ENCODE measurements at regions of chr6 and their contacts with region 1.

Region 1: DNA sequence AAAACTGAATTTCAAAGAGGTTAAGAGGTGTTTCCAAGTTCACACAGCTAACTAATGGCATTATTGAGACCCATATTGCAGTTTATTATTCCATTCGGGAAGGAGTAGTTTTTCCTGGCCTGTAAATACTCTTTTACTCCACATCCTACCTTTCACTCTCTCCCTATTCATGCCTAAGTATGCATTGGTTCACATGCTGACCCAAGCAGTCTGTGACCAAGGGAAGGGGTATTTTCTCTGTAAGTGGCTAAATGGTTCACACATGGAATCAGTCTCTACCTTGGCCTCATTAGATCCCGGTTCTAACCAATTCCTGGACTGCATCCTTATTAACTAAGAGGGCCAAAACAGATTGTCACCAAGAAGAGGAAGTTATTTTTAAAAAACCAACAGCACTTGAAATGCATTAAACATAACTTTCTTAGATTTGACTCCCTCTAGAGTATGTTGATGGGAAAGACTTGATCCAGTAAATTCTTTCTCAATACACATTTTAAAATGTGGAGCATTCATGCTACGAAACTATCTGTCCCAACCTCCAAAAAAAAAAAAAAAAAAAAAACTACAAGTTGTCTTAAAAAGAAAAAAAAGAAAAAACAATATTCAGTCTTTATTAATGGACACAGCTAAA is 17.8 kb upstream of the RSPO3 start:
- DNase-seq: no peak
- ATAC-seq: peak; percentile 62
- H3K4me3 ChIP-seq: no peak overlapping the region
- H3K27ac ChIP-seq: no peak overlapping the region
- H3K4me1 ChIP-seq: no peaks in the 10 kb centered on the region
- H3K27me3 ChIP-seq: peaks cover 45% of the 10 kb centered on the region
- CTCF ChIP-seq: peak; percentile 20 to 51 (median 20); a peak in 4 of 6 replicates
- POLR2A ChIP-seq: no peak
- RAD21 ChIP-seq: peak; percentile 49

Region 2: DNA sequence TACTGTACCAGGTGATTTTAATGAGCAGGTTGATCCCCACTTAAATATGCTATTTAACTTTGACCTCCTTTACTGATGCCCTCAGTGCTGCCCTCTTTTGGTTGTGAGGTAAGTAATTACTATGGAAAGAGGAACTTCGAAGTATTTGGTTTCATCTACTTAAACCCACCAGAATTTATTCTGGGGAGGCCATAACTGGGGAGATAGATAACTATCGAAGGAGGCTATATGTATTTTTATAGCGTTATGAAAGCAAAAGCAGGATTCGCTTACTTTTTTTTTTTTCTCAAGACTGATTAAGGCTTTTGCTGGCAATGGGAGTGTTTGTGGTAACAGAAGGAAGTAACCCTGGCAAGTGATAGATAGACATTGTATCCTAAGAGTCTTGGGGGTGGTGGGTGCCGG is 929.6 kb before region 1 on chr6:
- CTCF ChIA-PET with region 1: no interaction called
- POLR2A ChIA-PET with region 1: no interaction called
- RAD21 ChIA-PET with region 1: no interaction called
- intact Hi-C with region 1: loop called (anchors 10 kb)
- DNase-seq: no peak
- ATAC-seq: peak; percentile 78
- H3K4me3 ChIP-seq: no peak overlapping the region
- H3K27ac ChIP-seq: no peak overlapping the region
- H3K4me1 ChIP-seq: no peaks in the 10 kb centered on the region
- H3K27me3 ChIP-seq: no peaks in the 10 kb centered on the region
- CTCF ChIP-seq: peak; percentile 27 to 78 (median 59); a peak in 5 of 6 replicates
- POLR2A ChIP-seq: no peak
- RAD21 ChIP-seq: peak; percentile 39

Region 3: GRCh38 chr6:127178746-127179145 is 78.1 kb after region 1 on chr6:
- CTCF ChIA-PET with region 1: no interaction called
- POLR2A ChIA-PET with region 1: no interaction called
- RAD21 ChIA-PET with region 1: no interaction called
- intact Hi-C with region 1: no loop called
- DNase-seq: no peak
- ATAC-seq: no peak
- H3K4me3 ChIP-seq: no peak overlapping the region
- H3K27ac ChIP-seq: no peak overlapping the region
- H3K4me1 ChIP-seq: no peaks in the 10 kb centered on the region
- H3K27me3 ChIP-seq: no peaks in the 10 kb centered on the region
- CTCF ChIP-seq: no peak
- POLR2A ChIP-seq: no peak
- RAD21 ChIP-seq: no peak